Ovary (tissue), 10 donors: ENCODE measurements at regions of chr5 and their contacts with region 1.

Region 1: DNA sequence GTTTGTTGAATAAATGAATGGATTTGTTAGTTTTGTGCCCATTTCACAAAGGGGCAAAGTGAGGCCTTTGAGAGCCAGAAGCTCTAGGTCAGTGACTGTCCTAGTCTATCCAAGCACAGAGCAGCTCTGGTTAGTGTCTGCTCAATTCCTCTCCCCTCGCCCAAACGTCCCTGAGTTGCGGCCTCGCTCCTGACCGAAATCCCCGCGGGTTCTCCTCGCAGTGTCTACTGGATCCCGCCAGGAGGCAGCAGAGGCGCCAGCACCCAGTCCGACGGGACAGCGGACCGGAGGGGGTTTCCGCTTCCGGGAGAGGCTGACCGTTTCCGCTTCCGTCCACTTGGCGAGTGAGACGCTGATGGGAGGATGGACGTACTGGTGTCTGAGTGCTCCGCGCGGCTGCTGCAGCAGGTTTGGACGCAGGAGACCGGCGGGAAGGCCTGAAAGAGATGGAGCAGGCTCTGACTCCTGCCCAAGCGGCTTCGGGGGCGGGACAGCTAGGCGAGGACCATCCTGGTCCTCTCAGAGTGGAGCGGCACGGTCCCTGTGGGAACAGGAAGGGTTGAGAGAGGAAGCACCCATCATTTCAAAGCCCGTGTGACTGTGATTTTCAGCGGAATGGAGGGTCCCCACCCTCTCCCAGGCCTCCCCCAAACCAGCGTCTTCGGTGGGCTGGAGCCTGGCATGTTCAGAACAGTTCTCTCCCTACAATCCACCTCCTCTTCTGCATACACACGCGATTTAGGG is at the start of gene RARS1:
- DNase-seq: peak; percentile 91 to 95 (median 93)
- H3K4me3 ChIP-seq: peak within 1 kb of the TSS; percentile 97
- H3K27ac ChIP-seq: no peak within 1 kb of the TSS
- H3K4me1 ChIP-seq: no peaks in the 10 kb centered on the region
- H3K27me3 ChIP-seq: no peaks in the 10 kb centered on the region
- CTCF ChIP-seq: peak; percentile 90 to 99 (median 94)
- EP300 ChIP-seq: no peak
- POLR2A ChIP-seq: peak; percentile 85
- total RNA-seq, gene RARS1: 62.0 to 104 (median 75.3) TPM

Region 2: DNA sequence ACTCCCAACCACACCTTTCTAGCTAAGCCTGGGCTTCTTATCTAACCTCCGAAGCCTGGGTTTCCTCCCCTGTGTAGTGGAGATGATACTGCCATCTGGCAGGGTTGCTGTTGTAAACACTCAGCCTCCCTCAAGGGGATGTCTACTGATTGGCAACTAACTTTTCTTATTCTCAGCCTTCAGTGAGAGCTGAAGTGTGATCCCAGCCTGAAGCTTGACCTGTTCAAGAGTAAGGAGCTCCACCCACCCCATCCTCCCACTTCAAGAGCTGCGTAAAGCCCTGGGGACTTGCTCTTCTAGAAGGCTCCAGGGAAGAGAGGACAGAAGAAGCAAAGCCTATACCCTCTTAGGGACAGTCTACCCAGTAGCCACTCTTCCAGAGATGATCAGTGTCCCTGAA is 216.3 kb before region 1 on chr5:
- intact Hi-C with region 1: loop called in 1 of 4 experiments (anchors 10 kb)
- DNase-seq: no peak
- H3K4me3 ChIP-seq: no peak overlapping the region
- H3K27ac ChIP-seq: no peak overlapping the region
- H3K4me1 ChIP-seq: no peaks in the 10 kb centered on the region
- H3K27me3 ChIP-seq: no peaks in the 10 kb centered on the region
- CTCF ChIP-seq: no peak
- EP300 ChIP-seq: no peak
- POLR2A ChIP-seq: no peak

Region 3: DNA sequence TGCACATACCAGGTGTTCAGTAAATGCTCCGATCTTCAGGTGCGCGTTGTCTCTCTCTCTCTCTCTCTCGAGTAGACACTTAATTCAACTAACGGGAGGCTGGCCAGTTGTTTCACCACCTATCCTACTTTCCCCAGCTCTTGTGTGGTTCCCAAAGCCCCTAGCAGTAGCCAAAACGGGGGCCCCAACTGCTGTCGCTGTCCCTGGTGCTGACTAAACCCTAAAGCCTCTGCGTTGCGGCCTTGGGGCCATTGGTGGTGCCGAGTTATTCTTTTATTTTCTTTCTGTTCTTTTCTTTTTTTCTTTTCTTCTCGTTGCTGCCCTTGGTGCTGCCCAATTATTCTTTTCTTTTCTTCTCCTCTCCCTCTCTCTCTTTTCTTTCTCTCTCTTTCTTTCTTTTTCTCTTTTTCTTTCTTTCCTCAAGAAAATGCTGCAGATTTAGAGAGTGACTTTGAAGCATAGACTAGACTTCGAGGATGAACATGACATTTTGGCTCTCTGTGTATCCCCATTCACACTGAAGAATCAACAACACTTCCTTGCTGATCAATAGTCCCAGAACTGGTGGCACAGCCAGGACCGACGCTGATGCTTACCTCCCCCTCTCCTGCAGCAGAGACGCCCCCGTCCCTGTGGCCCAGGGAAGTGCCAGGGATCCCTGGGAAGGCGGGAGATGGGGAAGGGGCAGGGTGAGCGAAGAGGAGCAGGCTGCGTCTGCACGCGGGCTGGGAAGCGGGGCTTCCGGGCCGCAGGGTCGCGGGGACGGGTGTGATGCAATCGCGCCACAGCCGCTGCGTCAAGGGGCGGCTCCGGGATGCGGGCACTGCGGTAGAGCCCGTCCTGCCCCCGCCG is 42.4 kb after region 1 on chr5 and contains the start of gene FBLL1:
- intact Hi-C with region 1: loop called in 1 of 4 experiments (anchors 2 kb)
- DNase-seq: peak; percentile 26 to 62 (median 42)
- H3K4me3 ChIP-seq: peak within 1 kb of the TSS; percentile 31
- H3K27ac ChIP-seq: no peak within 1 kb of the TSS
- H3K4me1 ChIP-seq: peaks cover 5% of the 10 kb centered on the region
- H3K27me3 ChIP-seq: no peaks in the 10 kb centered on the region
- CTCF ChIP-seq: no peak
- EP300 ChIP-seq: no peak
- POLR2A ChIP-seq: no peak
- total RNA-seq, gene FBLL1: 0.23 to 4.9 (median 1.0) TPM